Activated naive CD4-positive, alpha-beta T cell treated with anti-CD3 and anti-CD28 coated beads for 36 hours (primary cell): ENCODE measurements at regions of chr4 and their contacts with region 1.

Region 1: GRCh38 chr4:86934771-86935565 is at the start of gene AFF1:
- DNase-seq: peak; percentile 89
- H3K4me3 Mint-ChIP-seq: peak within 1 kb of the TSS; percentile 87
- H3K27ac Mint-ChIP-seq: peak within 1 kb of the TSS; percentile 92
- H3K4me1 Mint-ChIP-seq: peaks cover 40% of the 10 kb centered on the region
- H3K27me3 Mint-ChIP-seq: no peaks in the 10 kb centered on the region
- total RNA-seq, gene AFF1: 46.6 to 50.6 TPM

Region 2: GRCh38 chr4:86947501-86948120 is 12.6 kb after region 1 on chr4:
- CTCF ChIA-PET with region 1: interaction called, 6 read pairs
- intact Hi-C with region 1: loop called (anchors 1 kb)
- DNase-seq: no peak
- H3K4me3 Mint-ChIP-seq: no peak overlapping the region
- H3K27ac Mint-ChIP-seq: no peak overlapping the region
- H3K4me1 Mint-ChIP-seq: peaks cover 33% of the 10 kb centered on the region
- H3K27me3 Mint-ChIP-seq: no peaks in the 10 kb centered on the region

Region 3: GRCh38 chr4:86977621-86978184 is 42.7 kb after region 1 on chr4:
- CTCF ChIA-PET with region 1: interaction called, 4 read pairs
- intact Hi-C with region 1: loop called (anchors 1 kb)
- DNase-seq: no peak
- H3K4me3 Mint-ChIP-seq: no peak overlapping the region
- H3K27ac Mint-ChIP-seq: no peak overlapping the region
- H3K4me1 Mint-ChIP-seq: peaks cover 54% of the 10 kb centered on the region
- H3K27me3 Mint-ChIP-seq: no peaks in the 10 kb centered on the region

Region 4: DNA sequence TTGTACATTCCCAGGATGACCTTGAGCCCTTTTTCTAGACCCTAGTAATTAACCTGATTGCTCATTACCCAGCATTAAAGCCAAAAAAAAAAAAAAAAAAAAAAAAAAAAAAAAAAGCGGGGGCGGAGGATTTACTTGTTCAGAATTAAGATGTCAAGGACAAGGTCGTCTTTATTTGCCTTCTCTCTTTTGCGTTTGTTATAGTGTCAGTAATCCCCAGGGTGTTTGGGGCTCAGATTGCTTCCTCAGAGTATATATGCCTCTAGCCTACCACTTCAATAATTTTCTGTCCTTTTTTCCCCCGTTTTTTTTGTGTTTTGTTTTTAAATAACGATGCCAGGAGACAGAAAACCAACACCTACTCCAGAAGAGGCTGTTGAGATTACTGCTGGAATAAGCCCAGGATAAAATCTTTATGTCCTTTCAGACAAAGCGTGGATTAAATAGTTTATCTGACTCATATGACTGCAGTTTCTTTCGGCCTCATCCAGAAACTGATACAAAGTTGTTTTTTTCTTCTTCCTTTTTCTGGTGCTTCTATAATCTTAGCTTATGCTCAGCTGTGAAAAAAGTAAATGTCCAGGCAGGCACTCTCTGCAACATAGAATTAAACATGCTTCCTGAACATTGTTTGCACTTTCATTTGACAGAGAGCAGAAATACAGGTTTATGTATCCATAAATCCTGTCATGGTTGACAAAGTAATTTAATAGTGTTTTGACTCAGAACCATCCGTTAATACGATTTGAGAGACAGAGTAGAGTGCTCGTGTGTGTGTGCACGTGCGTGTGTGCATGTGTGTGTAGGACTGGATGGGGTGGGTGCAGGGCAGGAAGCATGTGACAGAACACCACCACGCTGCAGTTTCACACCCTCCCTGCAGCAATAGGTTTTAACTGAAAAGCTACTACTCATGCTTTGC is 138.5 kb after region 1 on chr4:
- CTCF ChIA-PET with region 1: interaction called, 5 read pairs
- intact Hi-C with region 1: loop called (anchors 1 kb)
- DNase-seq: peak; percentile 77
- H3K4me3 Mint-ChIP-seq: peak overlapping the region; percentile 55
- H3K27ac Mint-ChIP-seq: peak overlapping the region; percentile 67
- H3K4me1 Mint-ChIP-seq: peaks cover 44% of the 10 kb centered on the region
- H3K27me3 Mint-ChIP-seq: no peaks in the 10 kb centered on the region

Region 5: DNA sequence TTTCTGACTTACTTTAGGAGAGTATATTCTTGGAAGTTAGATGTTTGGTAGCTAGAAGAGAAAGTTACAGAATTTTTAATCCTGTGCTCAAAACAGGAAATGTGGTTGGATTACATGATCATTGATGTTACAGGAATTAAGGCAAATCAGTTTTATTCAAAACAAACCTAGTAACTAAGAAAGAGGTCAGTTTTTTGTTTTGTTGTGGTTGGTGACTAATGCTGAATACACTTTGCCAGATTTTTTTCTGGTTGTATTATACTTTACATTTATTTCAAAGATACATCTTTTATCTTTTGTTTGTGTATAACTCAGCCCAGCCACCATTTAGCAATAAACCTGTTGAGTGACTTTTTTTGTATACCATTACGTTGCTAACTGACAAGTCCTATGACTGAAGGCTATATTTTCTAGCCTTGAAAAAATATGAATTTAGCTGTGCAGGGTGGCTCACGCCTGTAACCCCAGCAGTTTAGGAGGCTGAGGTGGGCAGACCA is 168.8 kb after region 1 on chr4:
- CTCF ChIA-PET with region 1: interaction called, 3 read pairs
- intact Hi-C with region 1: loop called (anchors 1 kb)
- DNase-seq: no peak
- H3K4me3 Mint-ChIP-seq: peak overlapping the region; percentile 3
- H3K27ac Mint-ChIP-seq: peak overlapping the region; percentile 92
- H3K4me1 Mint-ChIP-seq: peaks cover 62% of the 10 kb centered on the region
- H3K27me3 Mint-ChIP-seq: no peaks in the 10 kb centered on the region

Region 6: GRCh38 chr4:87422104-87423052 is 487.4 kb after region 1 on chr4 and contains the start of gene NUDT9:
- CTCF ChIA-PET with region 1: no interaction called
- intact Hi-C with region 1: loop called (anchors 2 kb)
- DNase-seq: peak; percentile 91
- H3K4me3 Mint-ChIP-seq: peak within 1 kb of the TSS; percentile 98
- H3K27ac Mint-ChIP-seq: peak within 1 kb of the TSS; percentile 97
- H3K4me1 Mint-ChIP-seq: peaks cover 32% of the 10 kb centered on the region
- H3K27me3 Mint-ChIP-seq: no peaks in the 10 kb centered on the region
- total RNA-seq, gene NUDT9: 12.1 to 13.4 TPM